H1 (cell line): ENCODE measurements at regions of chr20 and their contacts with region 1.

Region 1: GRCh38 chr20:43537921-43538877 is 20.6 kb upstream of the SGK2 start:
- DNase-seq: peak in 1 of 2 experiments; percentile 86
- H3K4me3 ChIP-seq: no peak overlapping the region
- H3K27ac ChIP-seq: no peak overlapping the region
- H3K4me1 ChIP-seq: no peaks in the 10 kb centered on the region
- H3K27me3 ChIP-seq: no peaks in the 10 kb centered on the region
- CTCF ChIP-seq: peak; percentile 78 to 96 (median 81)
- EP300 ChIP-seq: no peak
- POLR2A ChIP-seq: no peak
- RAD21 ChIP-seq: peak; percentile 89 to 91

Region 2: DNA sequence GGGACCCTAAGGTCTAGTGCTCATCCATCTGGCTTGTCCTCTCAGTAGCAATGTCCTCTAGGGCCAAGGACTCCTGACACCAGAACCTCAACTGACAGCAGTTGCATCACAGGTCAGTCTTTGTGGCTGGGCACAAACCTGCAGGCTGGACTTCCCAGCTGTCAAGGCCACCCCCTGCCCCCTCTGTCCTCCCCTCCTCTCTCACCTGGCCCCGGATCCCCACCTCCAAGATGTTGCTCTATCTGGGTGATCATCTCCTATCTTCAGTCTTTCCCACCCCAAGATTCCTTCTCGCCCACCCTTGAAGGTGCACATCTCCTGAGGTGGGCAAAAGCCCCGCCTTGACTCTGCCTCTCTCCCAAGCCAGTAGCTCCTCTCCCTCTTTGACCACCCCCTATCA is 212.3 kb before region 1 on chr20:
- CTCF ChIA-PET with region 1: no interaction called
- POLR2A ChIA-PET with region 1: no interaction called
- DNase-seq: no peak
- H3K4me3 ChIP-seq: no peak overlapping the region
- H3K27ac ChIP-seq: no peak overlapping the region
- H3K4me1 ChIP-seq: peaks cover 0 to 3% (median 1%) of the 10 kb centered on the region in 4 experiments; a peak in 2 of 7 replicates
- H3K27me3 ChIP-seq: no peaks in the 10 kb centered on the region
- CTCF ChIP-seq: no peak
- EP300 ChIP-seq: no peak
- POLR2A ChIP-seq: no peak
- RAD21 ChIP-seq: no peak

Region 3: DNA sequence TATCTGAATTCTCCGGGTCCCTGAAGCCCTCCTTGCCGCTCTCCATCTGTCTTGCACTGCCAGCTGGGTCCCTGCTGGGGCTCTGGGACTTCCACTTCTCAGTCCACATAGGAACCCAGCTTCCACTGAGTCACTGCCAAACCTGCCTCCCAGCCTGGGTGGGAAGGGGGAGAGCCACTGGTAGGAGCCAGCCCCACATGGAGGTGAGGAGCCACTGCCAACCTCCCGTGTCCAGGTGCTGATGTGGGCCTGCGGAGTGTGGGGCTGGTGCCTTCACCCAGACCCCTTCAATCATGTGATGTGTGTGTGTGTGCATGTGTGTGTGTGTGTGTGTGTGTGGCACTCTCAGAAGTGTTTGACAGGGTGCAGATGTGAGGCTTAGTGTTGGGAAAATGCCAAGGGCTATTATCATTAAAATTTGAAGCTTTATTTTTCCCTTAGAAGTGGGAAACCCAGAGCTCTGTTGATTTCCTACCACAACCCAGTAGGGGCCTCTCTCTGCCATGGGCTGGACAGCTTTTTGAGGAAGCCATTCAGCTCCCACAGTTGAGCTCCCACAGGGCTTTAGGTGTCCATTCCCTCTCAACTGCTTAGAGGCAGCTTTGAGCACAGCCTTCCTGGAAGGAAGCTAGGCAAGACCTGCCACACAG is 11.3 kb after region 1 on chr20:
- CTCF ChIA-PET with region 1: interaction called, 46 read pairs
- POLR2A ChIA-PET with region 1: no interaction called
- DNase-seq: no peak
- H3K4me3 ChIP-seq: no peak overlapping the region
- H3K27ac ChIP-seq: no peak overlapping the region
- H3K4me1 ChIP-seq: no peaks in the 10 kb centered on the region
- H3K27me3 ChIP-seq: no peaks in the 10 kb centered on the region
- CTCF ChIP-seq: no peak
- EP300 ChIP-seq: no peak
- POLR2A ChIP-seq: no peak
- RAD21 ChIP-seq: no peak

Region 4: GRCh38 chr20:43570496-43570895 is 32.3 kb after region 1 on chr20:
- CTCF ChIA-PET with region 1: interaction called, 43 read pairs
- POLR2A ChIA-PET with region 1: no interaction called
- DNase-seq: no peak
- H3K4me3 ChIP-seq: no peak overlapping the region
- H3K27ac ChIP-seq: no peak overlapping the region
- H3K4me1 ChIP-seq: no peaks in the 10 kb centered on the region
- H3K27me3 ChIP-seq: no peaks in the 10 kb centered on the region
- CTCF ChIP-seq: no peak
- EP300 ChIP-seq: no peak
- POLR2A ChIP-seq: no peak
- RAD21 ChIP-seq: no peak

Region 5: GRCh38 chr20:43650997-43651525 is 112.9 kb after region 1 on chr20:
- CTCF ChIA-PET with region 1: interaction called, 11 read pairs
- POLR2A ChIA-PET with region 1: no interaction called
- DNase-seq: no peak
- H3K4me3 ChIP-seq: no peak overlapping the region
- H3K27ac ChIP-seq: no peak overlapping the region
- H3K4me1 ChIP-seq: no peaks in the 10 kb centered on the region
- H3K27me3 ChIP-seq: no peaks in the 10 kb centered on the region
- CTCF ChIP-seq: no peak
- EP300 ChIP-seq: no peak
- POLR2A ChIP-seq: no peak
- RAD21 ChIP-seq: no peak